Lower leg skin (tissue), 4 donors: ENCODE measurements at regions of chr15 and their contacts with region 1.

Region 1: GRCh38 chr15:37134699-37135131 is 34.4 kb upstream of the MEIS2 start:
- DNase-seq: no peak
- H3K4me3 ChIP-seq: no peak overlapping the region
- CTCF ChIP-seq: peak in 1 of 3 donors; percentile 43
- POLR2A ChIP-seq: no peak

Region 2: DNA sequence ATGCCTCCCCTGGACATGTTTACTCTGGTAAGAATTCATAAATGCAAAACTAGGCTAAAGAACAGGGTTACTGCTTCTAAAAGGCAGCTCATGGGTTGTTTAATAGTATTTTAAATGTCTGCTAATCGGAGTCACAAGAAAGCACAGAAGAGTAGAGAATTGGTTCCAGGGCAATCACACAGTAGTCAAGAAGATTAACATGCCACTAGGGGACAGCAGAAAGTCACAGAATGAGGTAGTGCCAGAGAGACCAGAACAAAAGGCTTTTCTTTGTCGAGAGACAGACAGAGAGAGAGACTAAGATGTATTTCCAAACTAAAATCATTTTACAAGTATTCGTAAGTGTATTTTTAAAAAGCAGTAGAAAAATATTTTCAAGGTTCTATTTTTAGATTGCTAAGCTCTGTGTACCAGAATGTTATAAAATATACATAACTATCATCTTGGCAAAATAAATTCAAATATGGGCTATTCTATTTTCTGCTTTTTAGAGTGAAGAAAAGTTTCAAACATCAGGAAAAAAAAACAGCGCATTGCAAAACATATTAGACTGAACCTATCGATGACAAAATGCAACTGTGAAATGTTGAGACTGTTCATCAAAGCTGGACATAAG is 633.5 kb before region 1 on chr15:
- intact Hi-C with region 1: loop called (anchors 10 kb)
- DNase-seq: no peak
- H3K4me3 ChIP-seq: no peak overlapping the region
- CTCF ChIP-seq: no peak
- POLR2A ChIP-seq: no peak

Region 3: GRCh38 chr15:36883713-36884517 is 250.8 kb before region 1 on chr15:
- intact Hi-C with region 1: loop called (anchors 2 kb)
- DNase-seq: peak; percentile 77 to 95
- H3K4me3 ChIP-seq: no peak overlapping the region
- CTCF ChIP-seq: peak in 1 of 3 donors; percentile 31
- POLR2A ChIP-seq: no peak